Activated CD4-positive, alpha-beta T cell treated with anti-CD3 and anti-CD28 coated beads, Interleukin-2, amount 10 ng/mL, durations not matched to agents 24 days and 14 days (primary cell): ENCODE measurements at regions of chr1 and their contacts with region 1.

Region 1: DNA sequence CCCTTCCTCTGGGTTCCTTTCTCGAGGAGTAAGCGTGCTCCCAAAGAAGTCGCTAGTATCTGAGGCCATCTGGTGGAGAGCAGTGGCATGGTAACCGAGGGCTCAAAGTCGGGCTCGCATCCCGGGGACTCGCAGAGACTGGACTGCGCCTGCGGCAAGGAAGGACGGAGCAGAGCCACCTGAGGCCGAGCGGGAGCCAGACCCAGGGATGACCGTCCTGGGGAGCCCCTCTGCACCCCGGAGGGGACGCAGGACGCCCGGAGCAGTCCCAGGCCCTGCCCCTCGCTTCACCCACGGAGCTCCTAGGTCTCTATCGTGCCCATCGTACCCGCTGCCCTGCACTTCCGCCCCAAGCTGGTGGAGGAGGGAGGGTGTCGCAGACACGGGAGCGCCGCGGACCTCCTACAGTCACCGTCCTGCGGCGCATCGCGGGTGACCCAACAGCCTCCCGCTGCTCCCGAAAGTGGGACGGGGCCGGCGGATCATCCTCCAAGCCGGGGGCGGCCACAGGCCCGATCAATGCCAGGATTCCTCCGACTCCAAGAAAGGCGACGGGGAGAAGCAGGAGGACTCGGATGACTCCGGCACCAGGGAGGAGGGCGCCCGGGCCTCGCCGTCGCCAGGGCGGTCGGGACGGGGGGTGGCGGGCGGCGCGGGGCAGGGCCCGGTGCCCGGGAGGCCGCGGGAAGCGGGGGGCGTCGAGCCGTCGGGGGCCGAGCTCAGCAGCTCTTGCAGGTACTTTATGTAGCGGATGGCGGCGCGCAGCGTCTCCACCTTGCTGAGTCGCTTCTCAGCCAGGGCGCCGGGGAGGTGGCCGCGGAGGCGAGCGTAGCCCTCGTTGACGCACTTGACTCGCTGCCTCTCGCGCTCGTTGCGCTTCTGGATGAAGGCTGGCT is 2.3 kb upstream of the CACNA1S start:
- DNase-seq: peak; percentile 90
- H3K4me3 Mint-ChIP-seq: peak overlapping the region; percentile 88
- H3K27ac Mint-ChIP-seq: peak overlapping the region; percentile 48
- H3K4me1 Mint-ChIP-seq: peaks cover 4% of the 10 kb centered on the region
- H3K27me3 Mint-ChIP-seq: peaks cover 40% of the 10 kb centered on the region

Region 2: GRCh38 chr1:200979574-200980451 is 134.7 kb before region 1 on chr1:
- intact Hi-C with region 1: loop called (anchors 2 kb)
- DNase-seq: peak; percentile 89
- H3K4me3 Mint-ChIP-seq: no peak overlapping the region
- H3K27ac Mint-ChIP-seq: no peak overlapping the region
- H3K4me1 Mint-ChIP-seq: no peaks in the 10 kb centered on the region
- H3K27me3 Mint-ChIP-seq: no peaks in the 10 kb centered on the region

Region 3: GRCh38 chr1:201085916-201086735 is 28.4 kb before region 1 on chr1:
- intact Hi-C with region 1: loop called (anchors 1 kb)
- DNase-seq: peak; percentile 73
- H3K4me3 Mint-ChIP-seq: no peak overlapping the region
- H3K27ac Mint-ChIP-seq: no peak overlapping the region
- H3K4me1 Mint-ChIP-seq: no peaks in the 10 kb centered on the region
- H3K27me3 Mint-ChIP-seq: peaks cover 22% of the 10 kb centered on the region